Esophagus muscularis mucosa (tissue), 4 donors: ENCODE measurements at regions of chr3 and their contacts with region 1.

Region 1: DNA sequence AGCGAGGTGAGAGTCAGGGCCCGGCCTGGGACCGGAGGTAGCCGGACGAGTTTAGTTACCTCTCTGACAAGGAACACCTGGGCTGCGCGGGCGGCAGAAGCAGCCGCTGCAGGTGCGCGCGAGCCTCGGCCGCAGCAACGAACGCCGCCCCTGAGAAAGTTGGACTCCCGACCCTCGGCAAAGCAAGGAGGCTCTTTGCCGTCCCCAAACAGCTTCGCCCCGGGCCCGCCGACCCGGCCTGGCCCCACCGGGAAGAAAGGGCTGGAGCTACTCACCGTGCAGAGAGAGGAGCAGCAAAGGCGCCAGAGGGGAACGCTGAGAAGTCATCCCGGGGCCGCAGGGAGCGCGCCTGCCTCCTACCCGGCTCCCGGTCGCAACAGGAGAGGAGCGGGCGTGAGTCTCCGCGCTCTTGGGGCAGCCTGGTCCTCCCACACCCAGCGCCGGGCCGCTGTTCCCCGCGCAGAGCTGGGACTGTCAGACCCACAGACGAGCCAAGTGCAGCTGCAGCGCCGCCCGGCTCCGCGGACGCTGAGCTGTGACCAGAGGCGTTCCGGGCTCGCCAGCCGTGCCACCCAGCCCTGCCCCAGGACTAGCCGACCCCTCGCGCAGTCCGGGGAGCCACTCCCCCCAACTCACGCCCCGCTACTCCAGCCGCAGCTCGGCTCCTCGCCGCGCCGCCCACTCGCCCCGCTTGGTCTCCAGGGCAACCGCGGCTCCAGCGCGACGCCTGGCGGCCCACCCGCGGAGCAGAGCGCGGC is at the start of gene IGSF11:
- DNase-seq: no peak
- H3K4me3 ChIP-seq: peak within 1 kb of the TSS; percentile 65 to 86 (median 68)
- H3K27ac ChIP-seq: peak within 1 kb of the TSS; percentile 68 to 78 (median 72)
- H3K4me1 ChIP-seq: peaks cover 7 to 14% (median 12%) of the 10 kb centered on the region in 4 donors
- H3K27me3 ChIP-seq: peaks cover 0 to 26% (median 0%) of the 10 kb centered on the region in 4 donors
- CTCF ChIP-seq: peak; percentile 76 to 83 (median 79)
- EP300 ChIP-seq: no peak
- POLR2A ChIP-seq: no peak
- total RNA-seq, gene IGSF11: 7.0 to 13.7 (median 8.2) TPM

Region 2: DNA sequence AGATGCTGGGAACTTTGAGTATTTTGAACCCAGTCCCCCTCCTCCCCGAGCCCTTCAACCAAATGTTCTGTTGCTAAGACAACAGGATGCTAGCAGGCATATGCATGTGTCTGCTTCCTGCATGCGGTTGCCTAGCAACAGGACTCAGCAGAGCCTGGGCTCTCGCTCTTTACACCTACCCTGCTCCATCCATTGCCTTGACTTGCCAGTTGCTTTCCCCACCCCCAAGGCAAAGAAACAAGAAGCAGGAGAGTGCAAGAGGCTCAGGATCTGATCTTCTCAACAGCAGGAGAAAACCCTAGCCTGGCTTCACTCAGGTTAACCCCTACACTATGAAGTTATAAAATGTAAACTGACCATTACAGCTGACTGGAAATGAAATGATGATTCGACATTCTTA is 392.8 kb before region 1 on chr3:
- intact Hi-C with region 1: no loop called
- DNase-seq: no peak
- H3K4me3 ChIP-seq: no peak overlapping the region
- H3K27ac ChIP-seq: no peak overlapping the region
- H3K4me1 ChIP-seq: no peaks in the 10 kb centered on the region
- H3K27me3 ChIP-seq: peaks cover 0 to 14% (median 0%) of the 10 kb centered on the region in 4 donors
- CTCF ChIP-seq: no peak
- EP300 ChIP-seq: no peak
- POLR2A ChIP-seq: no peak

Region 3: DNA sequence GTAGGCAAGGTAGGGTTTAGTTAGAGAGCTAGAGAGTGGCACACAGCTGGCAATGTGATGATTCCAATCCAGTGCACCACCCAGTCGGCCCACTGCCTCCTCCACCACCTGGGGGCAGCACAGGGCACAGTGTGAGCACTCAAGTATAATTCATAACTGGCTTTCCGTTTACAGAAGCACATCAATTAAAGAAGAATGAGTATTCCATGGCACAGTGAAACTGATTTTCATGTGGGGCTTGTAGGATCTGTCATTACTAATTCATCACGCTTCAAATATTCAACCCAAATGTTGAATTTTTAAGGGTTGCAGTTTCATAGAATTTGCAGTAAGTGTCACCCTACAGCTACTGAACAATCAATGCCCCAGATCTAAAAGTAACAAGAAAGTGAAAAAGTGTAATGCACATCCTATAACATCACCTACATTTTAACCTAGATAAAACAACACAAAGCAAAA is 149.7 kb before region 1 on chr3:
- intact Hi-C with region 1: loop called (anchors 1 kb)
- DNase-seq: no peak
- H3K4me3 ChIP-seq: peak overlapping the region in 1 of 4 donors; percentile 26
- H3K27ac ChIP-seq: no peak overlapping the region
- H3K4me1 ChIP-seq: no peaks in the 10 kb centered on the region
- H3K27me3 ChIP-seq: peaks cover 0 to 19% (median 0%) of the 10 kb centered on the region in 4 donors
- CTCF ChIP-seq: peak; percentile 87 to 88 (median 87)
- EP300 ChIP-seq: no peak
- POLR2A ChIP-seq: no peak

Region 4: DNA sequence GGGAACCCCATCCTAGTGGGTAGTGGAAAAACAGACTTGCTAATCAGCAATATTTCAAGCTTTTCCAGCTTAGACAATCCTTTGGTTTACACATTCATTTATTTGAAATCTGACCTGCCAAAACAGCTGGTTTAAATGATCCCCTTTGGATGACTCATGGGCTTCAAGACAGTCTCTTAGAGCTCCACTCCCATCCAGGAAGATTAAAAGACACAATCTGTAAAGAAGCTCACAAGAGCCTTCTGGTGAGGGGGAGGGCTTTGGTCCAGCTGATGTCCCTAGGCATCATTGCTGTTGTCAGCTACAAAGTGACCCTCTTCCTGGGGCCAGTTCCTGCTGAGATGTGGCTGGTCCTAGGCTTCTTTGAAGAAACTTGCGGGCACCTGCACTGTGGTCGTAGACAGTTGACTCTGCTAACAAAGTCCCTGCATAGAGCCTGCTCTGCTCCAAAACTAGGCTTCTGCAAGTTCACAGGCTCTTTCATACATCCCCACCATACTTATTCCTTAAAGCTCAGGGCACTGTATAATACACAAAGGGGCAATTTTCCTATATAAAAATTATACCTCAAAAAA is 73.5 kb before region 1 on chr3:
- intact Hi-C with region 1: loop called (anchors 10 kb)
- DNase-seq: no peak
- H3K4me3 ChIP-seq: no peak overlapping the region
- H3K27ac ChIP-seq: no peak overlapping the region
- H3K4me1 ChIP-seq: peaks cover 0 to 6% (median 0%) of the 10 kb centered on the region in 4 donors
- H3K27me3 ChIP-seq: no peaks in the 10 kb centered on the region
- CTCF ChIP-seq: no peak
- EP300 ChIP-seq: no peak
- POLR2A ChIP-seq: no peak

Region 5: GRCh38 chr3:119084371-119085072 is 50.1 kb after region 1 on chr3:
- intact Hi-C with region 1: no loop called
- DNase-seq: no peak
- H3K4me3 ChIP-seq: no peak overlapping the region
- H3K27ac ChIP-seq: no peak overlapping the region
- H3K4me1 ChIP-seq: no peaks in the 10 kb centered on the region
- H3K27me3 ChIP-seq: no peaks in the 10 kb centered on the region
- CTCF ChIP-seq: no peak
- EP300 ChIP-seq: no peak
- POLR2A ChIP-seq: no peak

Region 6: DNA sequence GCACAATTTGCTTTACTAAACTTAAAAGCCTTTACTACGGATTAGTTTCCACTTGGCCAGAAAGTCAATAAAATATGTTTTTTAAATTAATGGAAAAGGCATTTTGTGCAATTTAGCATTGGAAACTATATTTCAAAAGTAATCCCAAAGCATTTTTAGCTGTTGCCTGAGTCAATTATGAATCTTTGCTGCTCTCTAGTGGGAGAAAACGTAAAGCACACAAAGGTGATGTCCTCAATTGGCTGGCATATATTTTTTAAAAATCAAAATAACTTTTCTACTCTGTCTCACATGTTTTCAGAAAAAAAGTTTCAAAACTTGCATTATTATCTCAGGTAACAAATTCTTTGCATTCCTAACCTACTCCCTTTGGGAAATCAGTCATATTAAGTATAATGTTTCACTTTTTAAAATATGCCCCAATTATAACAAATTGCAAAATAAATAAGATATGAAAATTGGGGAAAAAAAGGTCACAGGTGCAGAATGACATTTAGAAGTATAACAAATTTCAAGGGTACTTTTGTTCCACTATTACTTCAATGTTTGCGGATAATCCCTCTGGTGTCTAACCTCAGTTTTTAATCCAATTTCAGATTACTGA is 64.3 kb after region 1 on chr3:
- intact Hi-C with region 1: loop called (anchors 5 kb)
- DNase-seq: no peak
- H3K4me3 ChIP-seq: no peak overlapping the region
- H3K27ac ChIP-seq: no peak overlapping the region
- H3K4me1 ChIP-seq: no peaks in the 10 kb centered on the region
- H3K27me3 ChIP-seq: no peaks in the 10 kb centered on the region
- CTCF ChIP-seq: peak; percentile 65 to 67 (median 67)
- EP300 ChIP-seq: no peak
- POLR2A ChIP-seq: no peak

Region 7: GRCh38 chr3:119643528-119643927 is 609.1 kb after region 1 on chr3:
- intact Hi-C with region 1: no loop called
- DNase-seq: no peak
- H3K4me3 ChIP-seq: no peak overlapping the region
- H3K27ac ChIP-seq: no peak overlapping the region
- H3K4me1 ChIP-seq: peaks cover 22 to 46% (median 36%) of the 10 kb centered on the region in 4 donors
- H3K27me3 ChIP-seq: no peaks in the 10 kb centered on the region
- CTCF ChIP-seq: no peak
- EP300 ChIP-seq: no peak
- POLR2A ChIP-seq: no peak